H1 (cell line): ENCODE measurements at regions of chr15 and their contacts with region 1.

Region 1: GRCh38 chr15:65101411-65101890 is 13.5 kb downstream of the UBAP1L start:
- DNase-seq: peak; percentile 73 to 96
- H3K4me3 ChIP-seq: peak overlapping the region; percentile 36 to 67 (median 58)
- H3K27ac ChIP-seq: no peak overlapping the region
- H3K4me1 ChIP-seq: peaks cover 0 to 2% (median 0%) of the 10 kb centered on the region in 4 experiments; a peak in 2 of 7 replicates
- H3K27me3 ChIP-seq: peaks cover 0 to 11% (median 5%) of the 10 kb centered on the region in 4 experiments; a peak in 3 of 7 replicates
- CTCF ChIP-seq: peak; percentile 74 to 97 (median 92)
- EP300 ChIP-seq: no peak
- POLR2A ChIP-seq: no peak
- RAD21 ChIP-seq: peak; percentile 90

Region 2: GRCh38 chr15:64693134-64693533 is 408.3 kb before region 1 on chr15:
- CTCF ChIA-PET with region 1: no interaction called
- POLR2A ChIA-PET with region 1: no interaction called
- DNase-seq: no peak
- H3K4me3 ChIP-seq: no peak overlapping the region
- H3K27ac ChIP-seq: no peak overlapping the region
- H3K4me1 ChIP-seq: peaks cover 3 to 21% (median 10%) of the 10 kb centered on the region in 4 experiments; a peak in 5 of 7 replicates
- H3K27me3 ChIP-seq: peaks cover 0 to 2% (median 0%) of the 10 kb centered on the region in 4 experiments; a peak in 1 of 7 replicates
- CTCF ChIP-seq: no peak
- EP300 ChIP-seq: no peak
- POLR2A ChIP-seq: peak; percentile 22 to 57; a peak in 2 of 3 replicates
- RAD21 ChIP-seq: no peak

Region 3: DNA sequence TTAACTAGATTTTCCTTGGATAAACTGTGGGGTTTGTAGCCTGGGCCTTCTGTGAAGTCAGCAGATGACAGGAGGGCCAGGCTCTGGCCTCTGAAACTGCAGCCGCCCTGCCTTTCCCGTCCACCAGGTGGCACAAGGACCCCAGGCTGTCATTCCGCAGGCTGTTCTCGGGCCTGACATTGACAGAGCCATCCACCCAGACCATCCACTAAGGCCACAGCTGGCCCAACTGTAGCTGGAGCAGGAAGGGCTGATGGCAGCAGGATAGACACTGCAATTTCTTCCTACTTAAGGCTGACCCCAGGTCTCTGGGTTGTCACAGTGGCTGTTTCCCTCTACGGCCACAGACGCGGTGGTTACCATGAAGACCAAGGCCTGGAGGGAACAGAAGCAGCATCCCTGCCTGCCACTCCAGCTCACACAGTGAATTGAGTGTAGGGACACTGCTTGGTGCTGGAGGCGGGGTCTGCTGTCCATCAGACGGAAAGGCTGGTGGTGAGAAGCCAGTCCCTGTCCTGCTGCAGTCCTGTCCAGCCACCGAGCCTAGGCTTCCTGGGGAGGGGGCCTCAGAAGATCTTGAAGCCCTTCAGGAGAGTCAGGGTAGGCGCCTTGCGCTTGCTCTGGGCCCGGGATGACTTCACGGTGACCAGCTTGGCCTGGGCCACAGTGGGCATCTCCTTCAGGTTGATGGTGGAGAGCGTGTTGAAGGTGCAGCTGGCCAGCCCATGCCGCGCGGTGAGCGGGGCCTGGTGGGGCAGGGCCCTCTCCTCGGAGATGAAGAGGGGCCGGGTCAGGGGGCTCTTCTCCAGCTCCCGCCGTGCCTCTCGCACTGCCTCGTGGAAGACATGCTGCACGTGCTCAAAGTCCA is 46.9 kb before region 1 on chr15:
- CTCF ChIA-PET with region 1: interaction called, 150 read pairs
- POLR2A ChIA-PET with region 1: interaction called, 4 read pairs
- DNase-seq: peak in 1 of 2 experiments; percentile 88
- H3K4me3 ChIP-seq: no peak overlapping the region
- H3K27ac ChIP-seq: no peak overlapping the region
- H3K4me1 ChIP-seq: no peaks in the 10 kb centered on the region
- H3K27me3 ChIP-seq: no peaks in the 10 kb centered on the region; a peak in 2 of 7 replicates
- CTCF ChIP-seq: peak; percentile 95 to 97 (median 97)
- EP300 ChIP-seq: no peak
- POLR2A ChIP-seq: no peak
- RAD21 ChIP-seq: peak; percentile 96

Region 4: DNA sequence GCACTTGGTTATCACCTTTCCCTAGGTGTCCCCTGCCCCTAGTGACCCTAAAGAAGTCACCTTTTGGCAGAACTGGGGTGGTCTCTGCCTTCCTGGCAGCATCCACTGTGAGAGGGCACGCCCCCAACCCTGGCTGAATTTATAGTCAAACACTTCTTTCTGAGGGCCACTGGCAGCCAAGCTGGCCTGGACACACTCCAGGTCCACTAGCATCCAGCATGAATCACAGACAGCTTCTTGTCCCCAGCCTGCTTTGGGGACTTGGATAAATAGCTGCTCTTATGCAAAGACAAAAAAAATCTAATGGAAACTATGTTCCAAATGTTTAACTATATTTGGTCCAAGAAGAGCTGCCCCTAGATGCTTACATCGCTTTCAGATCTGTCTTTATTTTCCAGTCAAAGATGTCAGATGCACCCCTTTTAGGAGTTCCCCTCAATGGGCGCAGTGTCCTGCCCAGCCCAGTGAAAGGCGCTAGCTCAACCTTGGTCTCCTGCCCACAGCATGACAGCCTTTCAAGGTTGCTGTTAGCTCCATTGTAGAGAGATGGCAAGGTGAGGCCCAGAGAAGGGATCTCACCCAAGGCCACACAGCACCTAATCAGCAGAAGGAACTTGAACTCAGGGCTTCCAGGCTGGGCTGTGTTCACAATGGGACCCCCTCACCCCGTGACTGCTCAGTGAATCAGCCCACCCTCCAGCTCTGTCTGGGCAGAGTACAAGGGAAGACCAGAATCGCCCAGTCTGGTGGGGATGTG is 40.6 kb before region 1 on chr15:
- CTCF ChIA-PET with region 1: interaction called, 150 read pairs
- POLR2A ChIA-PET with region 1: interaction called, 4 read pairs
- DNase-seq: no peak
- H3K4me3 ChIP-seq: no peak overlapping the region
- H3K27ac ChIP-seq: no peak overlapping the region
- H3K4me1 ChIP-seq: no peaks in the 10 kb centered on the region
- H3K27me3 ChIP-seq: no peaks in the 10 kb centered on the region; a peak in 1 of 7 replicates
- CTCF ChIP-seq: peak; percentile 8 to 34 (median 20); a peak in 2 of 4 replicates
- EP300 ChIP-seq: no peak
- POLR2A ChIP-seq: no peak
- RAD21 ChIP-seq: peak in 1 of 2 experiments; percentile 8; a peak in 1 of 4 replicates

Region 5: GRCh38 chr15:65069179-65069578 is 32.3 kb before region 1 on chr15:
- CTCF ChIA-PET with region 1: interaction called, 259 read pairs
- POLR2A ChIA-PET with region 1: interaction called, 3 read pairs
- DNase-seq: no peak
- H3K4me3 ChIP-seq: no peak overlapping the region
- H3K27ac ChIP-seq: no peak overlapping the region
- H3K4me1 ChIP-seq: peaks cover 5 to 19% (median 7%) of the 10 kb centered on the region in 4 experiments
- H3K27me3 ChIP-seq: peaks cover 0 to 6% (median 1%) of the 10 kb centered on the region in 4 experiments; a peak in 3 of 7 replicates
- CTCF ChIP-seq: no peak
- EP300 ChIP-seq: no peak
- POLR2A ChIP-seq: no peak
- RAD21 ChIP-seq: no peak

Region 6: GRCh38 chr15:65077981-65078352 is 23.5 kb before region 1 on chr15:
- CTCF ChIA-PET with region 1: interaction called, 259 read pairs
- POLR2A ChIA-PET with region 1: interaction called, 9 read pairs
- DNase-seq: peak; percentile 84 to 85
- H3K4me3 ChIP-seq: no peak overlapping the region
- H3K27ac ChIP-seq: no peak overlapping the region
- H3K4me1 ChIP-seq: peaks cover 3 to 13% (median 7%) of the 10 kb centered on the region in 4 experiments; a peak in 5 of 7 replicates
- H3K27me3 ChIP-seq: peaks cover 0 to 9% (median 8%) of the 10 kb centered on the region in 4 experiments; a peak in 5 of 7 replicates
- CTCF ChIP-seq: peak; percentile 77 to 95 (median 86)
- EP300 ChIP-seq: no peak
- POLR2A ChIP-seq: no peak
- RAD21 ChIP-seq: peak; percentile 69 to 74

Region 7: GRCh38 chr15:65086017-65086679 is 15.3 kb before region 1 on chr15:
- CTCF ChIA-PET with region 1: interaction called, 259 read pairs
- POLR2A ChIA-PET with region 1: interaction called, 16 read pairs
- DNase-seq: peak in 1 of 2 experiments; percentile 77
- H3K4me3 ChIP-seq: no peak overlapping the region
- H3K27ac ChIP-seq: no peak overlapping the region
- H3K4me1 ChIP-seq: peaks cover 15 to 32% (median 23%) of the 10 kb centered on the region in 4 experiments
- H3K27me3 ChIP-seq: peaks cover 0 to 7% (median 2%) of the 10 kb centered on the region in 4 experiments; a peak in 5 of 7 replicates
- CTCF ChIP-seq: peak; percentile 68 to 87 (median 82)
- EP300 ChIP-seq: no peak
- POLR2A ChIP-seq: no peak
- RAD21 ChIP-seq: peak; percentile 47 to 62

Region 8: DNA sequence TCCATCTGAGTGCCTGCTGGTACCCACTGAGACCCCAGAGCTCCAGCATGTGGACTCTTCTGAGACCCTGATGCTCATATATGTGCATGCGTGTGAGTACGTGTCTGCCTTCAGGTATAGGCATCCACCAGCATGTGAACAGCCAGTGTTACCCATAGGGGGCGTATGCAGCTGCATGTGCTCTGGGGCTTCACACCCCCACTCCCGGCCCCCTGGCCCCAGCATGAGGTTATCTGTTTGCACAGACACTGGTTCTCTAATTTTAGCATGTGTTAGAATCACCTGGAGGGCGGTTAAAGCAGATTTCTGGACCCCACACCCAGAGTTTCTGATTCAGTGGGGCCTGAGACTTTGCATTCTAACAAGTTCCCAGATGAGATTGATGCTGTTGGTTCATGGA is 110.6 kb after region 1 on chr15:
- CTCF ChIA-PET with region 1: no interaction called
- POLR2A ChIA-PET with region 1: no interaction called
- DNase-seq: peak in 1 of 2 experiments; percentile 71
- H3K4me3 ChIP-seq: no peak overlapping the region
- H3K27ac ChIP-seq: no peak overlapping the region
- H3K4me1 ChIP-seq: peaks cover 0 to 4% (median 0%) of the 10 kb centered on the region in 4 experiments; a peak in 3 of 7 replicates
- H3K27me3 ChIP-seq: no peaks in the 10 kb centered on the region; a peak in 1 of 7 replicates
- CTCF ChIP-seq: peak; percentile 74 to 94 (median 85)
- EP300 ChIP-seq: no peak
- POLR2A ChIP-seq: no peak
- RAD21 ChIP-seq: peak; percentile 49 to 62